Activated naive CD4-positive, alpha-beta T cell treated with anti-CD3 and anti-CD28 coated beads for 36 hours (primary cell): ENCODE measurements at regions of chr17 and their contacts with region 1.

Region 1: GRCh38 chr17:19447085-19447583 is 36.1 kb downstream of the RNF112 start:
- DNase-seq: peak; percentile 79
- H3K4me3 Mint-ChIP-seq: no peak overlapping the region
- H3K27ac Mint-ChIP-seq: no peak overlapping the region
- H3K4me1 Mint-ChIP-seq: no peaks in the 10 kb centered on the region
- H3K27me3 Mint-ChIP-seq: peaks cover 5% of the 10 kb centered on the region

Region 2: GRCh38 chr17:19250421-19251173 is 196.5 kb before region 1 on chr17:
- CTCF ChIA-PET with region 1: no interaction called
- intact Hi-C with region 1: no loop called
- DNase-seq: no peak
- H3K4me3 Mint-ChIP-seq: no peak overlapping the region
- H3K27ac Mint-ChIP-seq: no peak overlapping the region
- H3K4me1 Mint-ChIP-seq: no peaks in the 10 kb centered on the region
- H3K27me3 Mint-ChIP-seq: peaks cover 10% of the 10 kb centered on the region

Region 3: DNA sequence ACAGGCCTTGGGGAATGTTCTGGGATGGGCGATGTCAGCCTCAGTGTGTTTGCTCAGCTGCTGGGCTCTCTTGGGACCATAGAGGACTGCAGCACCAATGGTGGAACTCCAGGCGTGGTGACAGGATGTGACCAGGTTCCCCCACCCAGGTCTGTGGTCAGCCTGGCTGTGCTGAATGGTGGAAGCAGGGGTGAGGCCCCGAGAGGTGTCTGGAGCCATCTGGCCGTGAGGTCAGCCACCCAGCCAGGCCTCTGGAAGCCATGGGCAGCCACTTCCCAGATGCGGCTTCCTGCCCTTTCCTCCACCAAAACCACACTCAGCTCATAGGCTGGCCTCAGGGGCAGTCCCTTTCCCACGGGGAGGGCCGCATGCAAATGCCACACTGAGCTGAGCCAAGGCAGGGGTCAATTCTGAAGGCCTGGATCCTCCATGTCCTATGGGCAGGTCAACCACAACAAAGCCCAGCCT is 76.6 kb before region 1 on chr17:
- CTCF ChIA-PET with region 1: interaction called, 85 read pairs
- intact Hi-C with region 1: loop called (anchors 5 kb)
- DNase-seq: peak; percentile 18
- H3K4me3 Mint-ChIP-seq: no peak overlapping the region
- H3K27ac Mint-ChIP-seq: no peak overlapping the region
- H3K4me1 Mint-ChIP-seq: peaks cover 22% of the 10 kb centered on the region
- H3K27me3 Mint-ChIP-seq: no peaks in the 10 kb centered on the region

Region 4: DNA sequence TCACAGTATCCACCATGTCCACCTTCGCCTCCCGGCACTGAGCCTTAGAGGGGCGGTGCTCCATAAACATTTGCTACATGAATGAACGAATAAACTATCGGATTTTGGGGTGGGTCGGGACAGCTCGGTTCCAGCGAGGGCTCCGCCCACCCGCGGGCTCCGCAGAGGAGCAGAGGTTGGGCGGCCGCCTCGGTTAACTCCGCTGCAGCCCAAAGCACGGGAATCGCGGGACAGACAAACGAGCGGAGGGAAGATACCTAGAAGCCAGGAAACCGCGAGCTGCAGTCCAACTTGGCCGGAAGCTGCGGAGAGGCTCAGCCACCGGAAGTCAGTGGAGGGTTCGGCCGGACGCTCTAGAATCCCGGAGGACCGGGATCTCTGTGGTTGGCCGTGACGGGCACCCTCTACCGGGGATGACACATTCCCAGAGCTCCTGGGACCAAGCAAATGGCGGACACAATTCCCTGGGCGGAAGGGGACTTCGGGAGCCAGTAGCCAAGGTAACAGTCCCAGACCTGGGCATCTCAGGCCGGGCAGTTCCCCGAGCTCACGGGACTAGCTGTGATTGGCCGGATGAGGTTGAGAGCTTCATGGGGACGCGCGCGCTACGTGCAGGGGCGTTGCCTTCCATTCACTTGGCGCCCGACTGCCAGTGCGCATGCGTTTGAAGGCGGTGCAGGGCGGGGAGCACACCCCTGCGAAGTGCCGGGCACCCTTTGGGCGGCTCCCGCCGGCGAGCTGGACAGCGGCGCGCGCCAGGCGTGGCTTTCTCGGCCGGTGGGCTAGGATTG is 69.3 kb before region 1 on chr17:
- CTCF ChIA-PET with region 1: interaction called, 10 read pairs
- intact Hi-C with region 1: loop called (anchors 5 kb)
- DNase-seq: peak; percentile 95
- H3K4me3 Mint-ChIP-seq: peak overlapping the region; percentile 99
- H3K27ac Mint-ChIP-seq: peak overlapping the region; percentile 97
- H3K4me1 Mint-ChIP-seq: peaks cover 8% of the 10 kb centered on the region
- H3K27me3 Mint-ChIP-seq: no peaks in the 10 kb centered on the region

Region 5: GRCh38 chr17:19460700-19461099 is 13.6 kb after region 1 on chr17:
- CTCF ChIA-PET with region 1: interaction called, 11 read pairs
- intact Hi-C with region 1: no loop called
- DNase-seq: no peak
- H3K4me3 Mint-ChIP-seq: no peak overlapping the region
- H3K27ac Mint-ChIP-seq: no peak overlapping the region
- H3K4me1 Mint-ChIP-seq: peaks cover 40% of the 10 kb centered on the region
- H3K27me3 Mint-ChIP-seq: no peaks in the 10 kb centered on the region

Region 6: DNA sequence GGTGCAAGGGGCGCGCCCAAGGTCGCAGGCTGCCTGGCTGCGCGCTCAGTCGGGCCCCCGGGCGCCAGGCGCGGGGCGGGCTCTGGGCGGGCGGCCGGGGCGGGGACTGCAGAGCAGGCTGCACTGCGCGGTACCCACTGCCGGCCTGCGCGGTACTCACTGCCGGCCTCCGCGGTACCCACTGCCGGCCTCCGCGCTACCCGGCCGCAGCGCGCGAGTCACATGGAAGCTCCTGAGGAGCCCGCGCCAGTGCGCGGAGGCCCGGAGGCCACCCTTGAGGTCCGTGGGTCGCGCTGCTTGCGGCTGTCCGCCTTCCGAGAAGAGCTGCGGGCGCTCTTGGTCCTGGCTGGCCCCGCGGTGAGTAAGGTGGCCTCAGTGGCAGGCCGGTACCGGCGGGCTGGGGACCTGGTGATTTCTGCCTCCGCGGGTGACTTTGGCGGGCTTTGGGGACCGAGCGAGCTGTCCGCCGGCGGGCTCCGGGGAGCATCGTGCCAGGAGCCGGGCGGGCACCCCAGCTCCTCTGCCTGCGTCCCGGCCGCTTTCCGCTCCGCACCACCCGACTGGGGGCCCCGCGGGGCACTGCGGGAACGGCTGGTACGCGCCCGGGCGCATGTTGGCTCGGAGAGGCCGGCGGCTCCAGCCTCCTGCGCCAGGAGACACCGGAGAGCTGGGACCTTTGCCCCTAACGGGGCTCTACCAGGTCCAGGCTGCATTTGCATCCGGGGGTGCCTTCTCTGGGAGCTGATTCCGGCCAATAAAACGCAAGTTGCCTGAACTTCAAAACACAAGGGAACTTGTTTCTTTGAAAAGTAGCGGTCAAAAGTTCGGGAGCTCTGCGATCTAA is 86.8 kb after region 1 on chr17 and contains the start of gene SLC47A1:
- CTCF ChIA-PET with region 1: no interaction called
- intact Hi-C with region 1: no loop called
- DNase-seq: peak; percentile 20
- H3K4me3 Mint-ChIP-seq: peak within 1 kb of the TSS; percentile 62
- H3K27ac Mint-ChIP-seq: no peak within 1 kb of the TSS
- H3K4me1 Mint-ChIP-seq: peaks cover 12% of the 10 kb centered on the region
- H3K27me3 Mint-ChIP-seq: peaks cover 35% of the 10 kb centered on the region
- total RNA-seq, gene SLC47A1: 0.30 to 0.33 TPM